Activated CD4-positive, alpha-beta T cell treated with anti-CD3 and anti-CD28 coated beads for 36 hours (primary cell): ENCODE measurements at regions of chr1 and their contacts with region 1.

Region 1: GRCh38 chr1:151281969-151282882 is at the start of gene ZNF687:
- DNase-seq: peak; percentile 99
- ATAC-seq: peak; percentile 93
- H3K4me3 Mint-ChIP-seq: peak within 1 kb of the TSS; percentile 81
- H3K27ac Mint-ChIP-seq: peak within 1 kb of the TSS; percentile 95
- H3K4me1 Mint-ChIP-seq: peaks cover 27% of the 10 kb centered on the region
- H3K27me3 Mint-ChIP-seq: no peaks in the 10 kb centered on the region
- total RNA-seq, gene ZNF687: 27.2 to 30.1 TPM

Region 2: DNA sequence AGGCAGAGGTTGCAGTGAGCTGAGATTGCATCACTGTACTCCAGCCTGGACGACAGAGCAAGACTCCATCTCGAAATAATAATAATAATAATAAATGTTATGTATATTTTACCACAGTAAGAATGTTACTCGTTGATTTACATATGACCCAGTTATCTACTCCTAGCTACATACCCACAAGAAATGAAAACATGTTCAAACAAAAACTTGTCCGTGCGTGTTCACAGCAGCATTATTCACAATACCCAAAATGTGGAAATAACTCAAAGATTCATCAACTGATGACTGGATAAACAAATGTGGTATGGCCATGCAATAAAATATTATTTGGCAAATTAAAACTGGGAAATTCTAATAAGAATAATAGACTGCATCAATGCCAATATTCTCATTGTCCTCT is 621.1 kb before region 1 on chr1:
- CTCF ChIA-PET with region 1: no interaction called
- POLR2A ChIA-PET with region 1: no interaction called
- intact Hi-C with region 1: no loop called
- DNase-seq: no peak
- ATAC-seq: no peak
- H3K4me3 Mint-ChIP-seq: no peak overlapping the region
- H3K27ac Mint-ChIP-seq: no peak overlapping the region
- H3K4me1 Mint-ChIP-seq: peaks cover 3% of the 10 kb centered on the region
- H3K27me3 Mint-ChIP-seq: no peaks in the 10 kb centered on the region

Region 3: GRCh38 chr1:151070474-151071276 is 211.6 kb before region 1 on chr1 and contains the start of gene GABPB2:
- CTCF ChIA-PET with region 1: no interaction called
- POLR2A ChIA-PET with region 1: interaction called, 3 read pairs
- intact Hi-C with region 1: loop called in 1 of 2 experiments (anchors 1 kb)
- DNase-seq: peak; percentile 93
- ATAC-seq: peak; percentile 86
- H3K4me3 Mint-ChIP-seq: peak within 1 kb of the TSS; percentile 99
- H3K27ac Mint-ChIP-seq: peak within 1 kb of the TSS; percentile 100
- H3K4me1 Mint-ChIP-seq: peaks cover 18% of the 10 kb centered on the region
- H3K27me3 Mint-ChIP-seq: no peaks in the 10 kb centered on the region
- total RNA-seq, gene GABPB2: 16.6 to 19.2 TPM

Region 4: GRCh38 chr1:151198255-151199127 is 83.7 kb before region 1 on chr1 and contains the start of gene PIP5K1A:
- CTCF ChIA-PET with region 1: no interaction called
- POLR2A ChIA-PET with region 1: no interaction called
- intact Hi-C with region 1: loop called (anchors 1 kb)
- DNase-seq: peak; percentile 100
- ATAC-seq: peak; percentile 90
- H3K4me3 Mint-ChIP-seq: peak within 1 kb of the TSS; percentile 98
- H3K27ac Mint-ChIP-seq: peak within 1 kb of the TSS; percentile 100
- H3K4me1 Mint-ChIP-seq: peaks cover 38% of the 10 kb centered on the region
- H3K27me3 Mint-ChIP-seq: no peaks in the 10 kb centered on the region
- total RNA-seq, gene PIP5K1A: 74.5 to 85.1 TPM

Region 5: GRCh38 chr1:151327223-151327902 is 45.1 kb after region 1 on chr1 and contains the start of gene PI4KB:
- CTCF ChIA-PET with region 1: interaction called, 5 read pairs
- POLR2A ChIA-PET with region 1: interaction called, 10 read pairs
- intact Hi-C with region 1: loop called (anchors 1 kb)
- DNase-seq: peak; percentile 92
- ATAC-seq: peak; percentile 94
- H3K4me3 Mint-ChIP-seq: peak within 1 kb of the TSS; percentile 92
- H3K27ac Mint-ChIP-seq: peak within 1 kb of the TSS; percentile 95
- H3K4me1 Mint-ChIP-seq: peaks cover 30% of the 10 kb centered on the region
- H3K27me3 Mint-ChIP-seq: no peaks in the 10 kb centered on the region
- total RNA-seq, gene PI4KB: 53.0 to 54.5 TPM

Region 6: DNA sequence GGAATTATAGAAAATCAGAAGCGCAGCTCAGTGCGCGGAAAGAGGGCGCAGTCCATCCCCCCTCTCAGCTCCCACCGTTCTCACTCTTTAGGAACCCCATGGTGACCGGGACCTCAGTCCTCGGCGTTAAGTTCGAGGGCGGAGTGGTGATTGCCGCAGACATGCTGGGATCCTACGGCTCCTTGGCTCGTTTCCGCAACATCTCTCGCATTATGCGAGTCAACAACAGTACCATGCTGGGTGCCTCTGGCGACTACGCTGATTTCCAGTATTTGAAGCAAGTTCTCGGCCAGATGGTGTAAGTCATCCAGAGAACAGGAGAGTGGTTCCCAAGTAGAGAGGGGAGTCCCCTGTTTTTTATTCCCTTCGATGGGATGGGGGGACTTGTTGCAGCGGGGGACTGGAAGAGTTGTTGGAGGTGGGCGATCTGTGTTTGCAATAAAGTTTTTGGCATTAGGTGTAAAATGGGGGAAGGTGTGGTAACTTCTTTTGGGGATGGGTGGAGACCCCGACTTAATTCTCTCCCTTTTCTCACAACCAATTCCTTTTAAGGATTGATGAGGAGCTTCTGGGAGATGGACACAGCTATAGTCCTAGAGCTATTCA is 117.8 kb after region 1 on chr1:
- CTCF ChIA-PET with region 1: no interaction called
- POLR2A ChIA-PET with region 1: interaction called, 10 read pairs
- intact Hi-C with region 1: loop called (anchors 1 to 5 kb)
- DNase-seq: peak; percentile 43
- ATAC-seq: peak; percentile 21
- H3K4me3 Mint-ChIP-seq: peak overlapping the region; percentile 88
- H3K27ac Mint-ChIP-seq: peak overlapping the region; percentile 99
- H3K4me1 Mint-ChIP-seq: peaks cover 29% of the 10 kb centered on the region
- H3K27me3 Mint-ChIP-seq: no peaks in the 10 kb centered on the region

Region 7: DNA sequence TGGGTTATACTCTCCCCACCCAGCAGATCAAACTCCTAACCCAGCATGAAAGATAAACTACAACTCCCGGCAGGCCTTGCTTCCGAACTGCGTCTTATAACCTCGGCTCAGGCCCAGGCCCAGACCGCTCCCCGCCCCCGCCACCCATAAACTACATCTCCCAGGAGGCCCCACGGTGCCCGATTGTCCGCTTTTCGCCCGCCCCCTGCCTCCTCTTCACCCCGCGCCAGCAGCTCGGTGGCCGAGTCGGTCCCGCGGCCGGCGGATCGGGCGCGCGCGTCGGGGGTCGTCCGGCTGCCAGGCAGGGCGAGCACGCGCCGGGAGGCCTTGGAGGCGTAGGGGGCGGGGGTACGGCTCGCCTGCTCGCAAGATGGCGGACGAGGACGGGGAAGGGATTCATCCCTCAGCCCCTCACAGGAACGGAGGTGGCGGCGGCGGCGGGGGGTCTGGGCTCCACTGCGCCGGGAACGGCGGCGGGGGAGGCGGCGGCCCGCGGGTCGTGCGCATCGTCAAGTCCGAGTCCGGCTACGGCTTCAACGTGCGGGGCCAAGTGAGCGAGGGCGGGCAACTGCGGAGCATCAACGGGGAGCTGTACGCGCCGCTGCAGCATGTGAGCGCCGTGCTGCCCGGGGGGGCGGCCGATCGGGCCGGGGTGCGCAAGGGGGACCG is 329.7 kb after region 1 on chr1 and contains the start of gene SNX27:
- CTCF ChIA-PET with region 1: no interaction called
- POLR2A ChIA-PET with region 1: no interaction called
- intact Hi-C with region 1: loop called in 1 of 2 experiments (anchors 2 kb)
- DNase-seq: peak; percentile 95
- ATAC-seq: peak; percentile 93
- H3K4me3 Mint-ChIP-seq: peak within 1 kb of the TSS; percentile 99
- H3K27ac Mint-ChIP-seq: peak within 1 kb of the TSS; percentile 95
- H3K4me1 Mint-ChIP-seq: peaks cover 46% of the 10 kb centered on the region
- H3K27me3 Mint-ChIP-seq: peaks cover 6% of the 10 kb centered on the region
- total RNA-seq, gene SNX27: 28.5 to 29.1 TPM

Region 8: GRCh38 chr1:151945725-151946364 is 663.6 kb after region 1 on chr1:
- CTCF ChIA-PET with region 1: no interaction called
- POLR2A ChIA-PET with region 1: no interaction called
- intact Hi-C with region 1: no loop called
- DNase-seq: peak; percentile 82
- ATAC-seq: peak; percentile 45
- H3K4me3 Mint-ChIP-seq: peak overlapping the region; percentile 42
- H3K27ac Mint-ChIP-seq: peak overlapping the region; percentile 88
- H3K4me1 Mint-ChIP-seq: peaks cover 42% of the 10 kb centered on the region
- H3K27me3 Mint-ChIP-seq: no peaks in the 10 kb centered on the region